Left cardiac atrium (tissue), 4 donors: ENCODE measurements at regions of chr1 and their contacts with region 1.

Region 1: DNA sequence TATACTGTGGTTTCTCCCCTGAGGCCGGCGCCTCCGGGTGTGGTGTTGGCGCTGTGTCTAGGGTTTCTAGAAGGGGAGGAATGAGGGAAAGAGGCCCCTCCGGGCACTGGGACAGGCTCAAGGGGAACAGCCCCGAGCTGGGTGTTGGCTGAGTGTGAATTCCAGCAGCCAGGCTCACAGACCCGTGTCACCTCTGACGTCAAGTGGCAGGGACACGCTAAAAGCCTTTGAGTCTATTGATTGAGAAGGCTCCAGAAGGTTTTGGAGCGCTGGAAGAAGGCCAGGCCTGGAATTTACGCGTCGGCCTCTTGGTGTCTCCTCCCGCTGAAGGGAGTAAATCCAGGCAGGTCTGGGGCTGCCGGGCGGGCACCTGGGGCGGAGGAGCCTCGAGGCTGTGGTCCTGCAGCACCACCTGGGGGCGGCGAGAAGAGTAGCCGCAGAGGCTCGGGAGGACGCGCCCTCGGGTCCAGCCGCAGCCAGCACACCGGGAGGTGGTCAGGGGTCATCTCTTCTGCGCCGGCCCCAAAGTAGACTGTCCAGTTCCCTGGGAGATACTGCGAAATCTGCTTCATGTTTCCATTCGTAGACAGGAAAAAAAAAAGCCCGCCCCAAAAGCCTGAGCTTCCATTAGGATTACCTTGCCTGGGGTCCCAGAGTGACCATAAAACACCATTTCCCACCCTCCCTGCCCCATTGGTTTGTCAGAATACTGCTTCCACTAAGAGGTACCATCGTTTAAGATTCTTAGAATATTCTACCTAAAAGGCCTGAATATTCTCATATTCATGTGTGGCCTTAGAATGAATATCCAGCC is 61.7 kb downstream of the TLR5 start:
- DNase-seq: peak; percentile 89
- ATAC-seq: peak; percentile 95

Region 2: GRCh38 chr1:222706815-222707214 is 374.6 kb before region 1 on chr1:
- intact Hi-C with region 1: no loop called
- DNase-seq: no peak
- ATAC-seq: no peak

Region 3: DNA sequence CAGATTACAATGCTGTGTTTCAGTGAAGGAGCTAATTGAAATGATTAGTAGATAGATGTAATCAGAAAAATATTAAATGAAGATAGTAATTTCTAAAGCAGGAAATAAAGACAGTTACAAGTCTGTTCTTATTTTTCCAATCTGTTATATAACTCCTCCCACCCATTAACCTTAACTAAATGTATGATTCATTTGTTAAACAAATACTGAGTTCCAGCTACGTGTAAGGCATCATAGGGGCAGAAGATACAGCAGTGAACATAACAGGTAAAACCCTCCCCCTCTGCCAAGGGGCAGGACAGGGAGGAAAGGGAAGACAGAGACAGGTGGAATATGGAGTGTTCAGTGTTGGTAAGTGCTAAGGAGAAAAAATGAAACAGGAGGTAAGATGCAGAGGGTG is 344.4 kb before region 1 on chr1 and contains the start of gene FAM177B:
- intact Hi-C with region 1: loop called (anchors 2 to 5 kb)
- DNase-seq: no peak
- ATAC-seq: no peak
- total RNA-seq, gene FAM177B: not detected

Region 4: DNA sequence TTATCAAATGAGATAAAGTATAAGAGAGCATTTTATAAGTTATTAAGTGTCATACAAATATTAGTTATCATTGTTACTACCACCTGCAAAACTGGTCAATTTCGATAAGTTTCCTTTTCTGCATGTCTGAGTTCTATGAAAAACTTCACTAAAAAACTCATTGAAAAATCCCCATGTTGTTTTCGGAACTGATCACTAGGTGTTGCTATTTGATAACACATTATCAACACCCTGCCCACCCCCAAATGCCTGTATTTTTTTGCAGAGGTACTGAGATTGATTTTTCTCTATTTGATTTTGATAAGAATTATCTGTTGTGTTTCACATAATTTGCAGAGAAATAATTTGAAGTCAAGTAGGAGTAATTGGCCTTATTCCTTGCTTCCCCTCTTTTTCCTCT is 288.6 kb before region 1 on chr1:
- intact Hi-C with region 1: loop called (anchors 1 to 5 kb)
- DNase-seq: no peak
- ATAC-seq: no peak

Region 5: GRCh38 chr1:222814536-222815439 is 266.6 kb before region 1 on chr1 and contains the start of gene DISP1:
- intact Hi-C with region 1: loop called in 1 of 2 experiments (anchors 5 kb)
- DNase-seq: peak; percentile 89
- ATAC-seq: peak; percentile 97 to 98
- total RNA-seq, gene DISP1: 4.2 to 8.0 TPM